ENCODE measurements at regions of chr6 and their contacts with region 1.

Region 1: GRCh38 chr6:131471331-131471730 is 101.7 kb upstream of the ARG1 start:
- DNase-seq: no peak
- H3K4me3 ChIP-seq: no peak overlapping the region
- H3K27ac ChIP-seq: no peak overlapping the region
- H3K4me1 ChIP-seq: no peaks in the 10 kb centered on the region
- H3K27me3 ChIP-seq: no peaks in the 10 kb centered on the region
- CTCF ChIP-seq: no peak
- EP300 ChIP-seq: no peak
- POLR2A ChIP-seq: no peak
- RAD21 ChIP-seq: no peak

Region 2: DNA sequence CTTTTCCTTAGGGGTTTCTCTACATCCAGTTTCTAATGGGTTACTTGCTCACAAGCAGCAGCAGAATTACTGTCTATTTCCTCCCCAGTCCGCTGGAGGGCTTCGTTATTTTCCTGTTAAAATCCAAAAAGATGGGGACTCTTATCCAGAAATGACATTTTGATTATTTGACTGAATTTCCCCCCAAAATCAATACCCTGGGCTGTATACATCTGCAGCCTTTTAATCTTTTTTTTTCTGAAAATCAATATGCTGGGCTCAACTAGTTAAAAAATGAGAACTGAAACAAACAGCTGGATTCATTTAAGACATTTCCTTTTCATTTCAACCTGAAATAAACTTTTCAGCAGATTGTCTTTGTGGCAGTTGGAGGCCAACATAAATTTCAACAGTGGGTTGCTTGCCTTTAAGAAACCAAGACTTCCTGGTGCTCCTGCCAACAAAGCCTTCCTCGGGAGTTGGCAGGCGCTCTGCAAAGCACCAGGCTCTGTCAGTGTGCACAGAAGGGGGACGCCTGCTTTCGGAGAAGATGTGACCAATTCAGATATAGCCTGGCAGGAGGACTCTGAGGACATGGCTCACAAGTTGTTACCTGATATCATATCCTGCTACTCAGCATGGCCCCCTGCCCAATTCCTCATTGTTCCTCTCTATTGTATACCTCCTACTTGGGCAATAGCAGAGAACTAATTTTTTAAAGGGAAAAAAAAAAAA is 103.0 kb before region 1 on chr6:
- CTCF ChIA-PET with region 1: no interaction called
- POLR2A ChIA-PET with region 1: no interaction called
- DNase-seq: no peak
- H3K4me3 ChIP-seq: no peak overlapping the region
- H3K27ac ChIP-seq: no peak overlapping the region
- H3K4me1 ChIP-seq: peaks cover 0 to 5% (median 1%) of the 10 kb centered on the region in 4 experiments; a peak in 2 of 7 replicates
- H3K27me3 ChIP-seq: no peaks in the 10 kb centered on the region
- CTCF ChIP-seq: no peak
- EP300 ChIP-seq: no peak
- POLR2A ChIP-seq: no peak
- RAD21 ChIP-seq: no peak

Region 3: GRCh38 chr6:131519670-131520436 is 48.5 kb after region 1 on chr6:
- CTCF ChIA-PET with region 1: interaction called, 10 read pairs
- POLR2A ChIA-PET with region 1: no interaction called
- DNase-seq: peak in 1 of 2 experiments; percentile 62
- H3K4me3 ChIP-seq: no peak overlapping the region
- H3K27ac ChIP-seq: no peak overlapping the region
- H3K4me1 ChIP-seq: no peaks in the 10 kb centered on the region
- H3K27me3 ChIP-seq: no peaks in the 10 kb centered on the region
- CTCF ChIP-seq: peak in 2 of 3 experiments; percentile 54 to 81; a peak in 3 of 4 replicates
- EP300 ChIP-seq: no peak
- POLR2A ChIP-seq: no peak
- RAD21 ChIP-seq: peak; percentile 64 to 77

Region 4: DNA sequence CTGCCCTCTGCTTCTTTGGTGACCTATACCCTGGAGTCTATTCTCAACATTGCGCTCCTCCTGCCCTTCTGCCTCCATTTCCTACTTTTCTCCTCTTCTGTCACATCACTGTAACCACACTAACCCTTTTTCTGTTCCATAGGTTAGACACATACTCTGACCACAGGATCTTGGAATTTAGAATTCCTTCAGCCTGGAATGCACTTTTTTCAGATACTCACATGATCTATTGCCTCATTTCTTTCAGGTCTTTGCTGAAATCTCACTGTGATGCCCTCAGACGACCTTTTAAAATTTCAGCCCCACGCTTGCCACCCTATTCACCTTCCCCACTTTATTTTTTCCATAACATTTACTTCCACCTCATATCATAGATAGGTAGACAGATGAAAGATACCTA is 1237.4 kb after region 1 on chr6:
- CTCF ChIA-PET with region 1: no interaction called
- POLR2A ChIA-PET with region 1: no interaction called
- DNase-seq: no peak
- H3K4me3 ChIP-seq: no peak overlapping the region
- H3K27ac ChIP-seq: no peak overlapping the region
- H3K4me1 ChIP-seq: no peaks in the 10 kb centered on the region
- H3K27me3 ChIP-seq: no peaks in the 10 kb centered on the region
- CTCF ChIP-seq: no peak
- EP300 ChIP-seq: no peak
- POLR2A ChIP-seq: no peak
- RAD21 ChIP-seq: no peak

Measured in H1 (cell line).